A673 (cell line): ENCODE measurements at regions of chr1 and their contacts with region 1.

Region 1: GRCh38 chr1:205121660-205122488 is at the start of gene RBBP5:
- DNase-seq: peak; percentile 97
- H3K4me3 ChIP-seq: peak within 1 kb of the TSS; percentile 87
- H3K27ac ChIP-seq: peak within 1 kb of the TSS; percentile 99
- H3K4me1 ChIP-seq: peaks cover 18% of the 10 kb centered on the region
- H3K27me3 ChIP-seq: no peaks in the 10 kb centered on the region
- CTCF ChIP-seq: peak; percentile 75
- total RNA-seq, gene RBBP5: 24.4 and 32.0 TPM in 2 replicates

Region 2: DNA sequence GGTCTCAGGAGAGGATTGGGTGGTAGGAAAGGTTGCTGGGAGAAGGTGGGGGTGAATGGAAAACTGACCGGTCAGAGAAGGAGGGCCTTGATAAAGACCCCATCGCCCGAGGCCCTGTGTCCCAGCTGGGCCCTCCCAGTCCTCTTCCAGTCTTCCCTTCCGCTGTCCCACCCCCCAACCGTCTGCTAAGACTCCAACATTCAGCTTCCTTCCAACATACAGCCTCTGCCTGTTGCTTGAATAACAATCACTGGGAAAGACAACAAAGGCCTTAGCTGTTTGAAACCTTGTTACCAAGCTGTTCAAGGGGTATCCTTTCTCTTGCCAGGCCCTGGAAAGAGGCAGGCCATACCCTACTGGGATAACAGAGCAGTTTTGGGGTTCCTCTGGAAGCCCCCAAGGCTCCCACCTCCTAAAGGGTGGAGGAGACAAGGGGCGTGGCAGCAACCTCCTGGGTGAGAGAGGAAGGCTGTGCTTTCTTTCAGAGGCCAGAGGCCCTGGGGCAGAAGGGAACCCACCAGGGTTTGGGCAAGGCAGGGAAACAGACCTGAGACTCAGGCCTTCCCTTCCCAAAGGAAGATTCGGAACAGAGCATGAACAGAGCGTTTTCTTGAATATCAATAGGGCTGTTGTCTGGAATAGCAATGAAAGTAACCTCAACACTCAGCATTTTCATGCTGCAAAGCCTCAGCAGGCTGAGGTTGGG is 974.3 kb before region 1 on chr1:
- CTCF ChIA-PET with region 1: no interaction called
- POLR2A ChIA-PET with region 1: no interaction called
- intact Hi-C with region 1: no loop called
- DNase-seq: no peak
- H3K4me3 ChIP-seq: no peak overlapping the region
- H3K27ac ChIP-seq: no peak overlapping the region
- H3K4me1 ChIP-seq: peaks cover 6% of the 10 kb centered on the region
- H3K27me3 ChIP-seq: no peaks in the 10 kb centered on the region
- CTCF ChIP-seq: no peak

Region 3: DNA sequence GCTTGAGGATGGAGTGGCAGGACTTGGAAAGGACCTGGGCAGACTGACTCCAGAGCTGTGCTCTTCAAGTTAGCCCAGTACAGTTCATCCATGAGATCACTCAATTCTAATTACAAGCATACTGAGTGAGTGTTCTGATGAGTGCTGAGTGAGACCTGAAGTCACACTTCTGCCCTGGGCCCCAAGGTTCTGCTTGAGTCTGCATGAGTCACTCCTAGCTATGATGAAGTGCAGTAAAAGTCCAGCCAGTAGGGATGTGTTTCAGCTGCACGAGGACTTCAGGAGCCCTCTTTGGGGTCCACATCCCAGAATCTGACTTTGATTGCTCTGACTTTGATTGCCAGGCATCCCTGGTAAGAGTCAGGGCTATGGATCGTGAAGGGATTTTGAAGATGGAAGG is 798.0 kb before region 1 on chr1:
- CTCF ChIA-PET with region 1: no interaction called
- POLR2A ChIA-PET with region 1: no interaction called
- intact Hi-C with region 1: no loop called
- DNase-seq: no peak
- H3K4me3 ChIP-seq: no peak overlapping the region
- H3K27ac ChIP-seq: no peak overlapping the region
- H3K4me1 ChIP-seq: no peaks in the 10 kb centered on the region
- H3K27me3 ChIP-seq: peaks cover 5% of the 10 kb centered on the region
- CTCF ChIP-seq: no peak

Region 4: DNA sequence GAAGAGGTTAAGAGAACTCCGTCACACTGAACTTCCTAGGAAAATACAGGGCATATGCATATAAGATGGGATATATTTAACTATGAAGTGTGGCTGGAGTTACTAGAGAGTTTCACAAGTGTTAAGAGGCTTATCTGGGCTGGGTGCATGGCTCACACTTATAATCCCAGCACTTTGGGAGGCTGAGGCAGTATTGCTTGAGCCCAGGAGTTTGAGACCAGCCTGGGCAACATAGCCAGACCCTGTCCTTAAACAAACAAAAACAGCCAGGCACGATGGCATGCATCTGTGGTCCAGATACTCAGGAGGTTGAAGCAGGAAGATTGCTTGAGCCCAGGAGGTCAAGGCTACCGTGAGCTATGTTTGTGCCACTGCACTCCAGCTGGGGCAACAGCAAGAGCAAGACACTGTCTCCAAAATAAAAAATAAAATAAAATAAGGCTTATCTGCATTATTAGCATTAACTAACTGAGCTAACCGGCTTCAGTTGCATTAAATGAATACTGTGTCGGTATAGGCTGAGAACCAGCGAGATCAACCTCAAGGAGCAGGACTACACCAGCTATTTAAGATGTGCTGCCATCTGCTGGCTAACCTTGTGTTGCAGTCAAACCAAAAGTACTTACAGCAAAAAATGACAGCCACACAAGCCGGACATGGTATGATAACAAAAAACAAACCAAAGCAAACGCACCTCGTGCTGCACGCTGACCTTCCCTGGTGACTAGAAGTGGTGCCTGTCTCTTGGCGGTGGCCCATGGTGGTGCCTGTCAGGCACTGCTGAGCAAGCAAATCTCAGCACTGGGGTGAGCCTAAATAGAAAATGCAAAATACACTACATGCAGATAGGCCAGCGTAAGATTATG is 19.6 kb after region 1 on chr1:
- CTCF ChIA-PET with region 1: interaction called, 15 read pairs
- POLR2A ChIA-PET with region 1: no interaction called
- intact Hi-C with region 1: no loop called
- DNase-seq: peak; percentile 82
- H3K4me3 ChIP-seq: no peak overlapping the region
- H3K27ac ChIP-seq: no peak overlapping the region
- H3K4me1 ChIP-seq: no peaks in the 10 kb centered on the region
- H3K27me3 ChIP-seq: no peaks in the 10 kb centered on the region
- CTCF ChIP-seq: peak; percentile 86

Region 5: DNA sequence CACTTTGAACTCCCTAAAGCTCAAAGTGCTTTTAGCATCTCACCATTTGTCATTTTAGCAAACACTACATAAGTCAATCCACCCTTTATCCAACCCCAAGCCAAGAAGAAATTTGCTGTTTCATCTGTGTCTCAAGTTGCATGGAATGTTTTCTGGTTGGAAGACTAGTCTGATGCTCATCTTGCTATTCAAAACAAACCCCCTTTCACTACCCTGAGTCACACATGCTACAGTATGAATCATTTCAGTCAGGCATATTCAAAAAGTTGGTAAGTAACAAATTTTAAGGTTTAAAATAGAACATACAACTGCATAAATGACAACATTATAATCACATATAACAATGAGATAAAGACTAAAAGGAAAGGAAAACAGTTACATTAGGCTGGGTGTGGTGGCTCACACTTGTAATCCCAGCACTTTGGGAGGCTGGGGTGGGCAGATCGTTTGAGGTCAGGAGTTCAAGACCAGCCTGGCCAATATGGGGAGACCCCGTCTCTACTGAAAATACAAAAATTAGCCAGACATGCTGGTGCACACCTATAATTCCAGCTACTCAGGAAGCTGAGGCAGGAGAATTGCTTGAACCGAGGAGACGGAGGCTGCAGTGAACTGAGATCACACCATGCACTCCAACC is 51.0 kb after region 1 on chr1:
- CTCF ChIA-PET with region 1: no interaction called
- POLR2A ChIA-PET with region 1: no interaction called
- intact Hi-C with region 1: no loop called
- DNase-seq: peak; percentile 9
- H3K4me3 ChIP-seq: no peak overlapping the region
- H3K27ac ChIP-seq: no peak overlapping the region
- H3K4me1 ChIP-seq: peaks cover 6% of the 10 kb centered on the region
- H3K27me3 ChIP-seq: no peaks in the 10 kb centered on the region
- CTCF ChIP-seq: no peak

Region 6: DNA sequence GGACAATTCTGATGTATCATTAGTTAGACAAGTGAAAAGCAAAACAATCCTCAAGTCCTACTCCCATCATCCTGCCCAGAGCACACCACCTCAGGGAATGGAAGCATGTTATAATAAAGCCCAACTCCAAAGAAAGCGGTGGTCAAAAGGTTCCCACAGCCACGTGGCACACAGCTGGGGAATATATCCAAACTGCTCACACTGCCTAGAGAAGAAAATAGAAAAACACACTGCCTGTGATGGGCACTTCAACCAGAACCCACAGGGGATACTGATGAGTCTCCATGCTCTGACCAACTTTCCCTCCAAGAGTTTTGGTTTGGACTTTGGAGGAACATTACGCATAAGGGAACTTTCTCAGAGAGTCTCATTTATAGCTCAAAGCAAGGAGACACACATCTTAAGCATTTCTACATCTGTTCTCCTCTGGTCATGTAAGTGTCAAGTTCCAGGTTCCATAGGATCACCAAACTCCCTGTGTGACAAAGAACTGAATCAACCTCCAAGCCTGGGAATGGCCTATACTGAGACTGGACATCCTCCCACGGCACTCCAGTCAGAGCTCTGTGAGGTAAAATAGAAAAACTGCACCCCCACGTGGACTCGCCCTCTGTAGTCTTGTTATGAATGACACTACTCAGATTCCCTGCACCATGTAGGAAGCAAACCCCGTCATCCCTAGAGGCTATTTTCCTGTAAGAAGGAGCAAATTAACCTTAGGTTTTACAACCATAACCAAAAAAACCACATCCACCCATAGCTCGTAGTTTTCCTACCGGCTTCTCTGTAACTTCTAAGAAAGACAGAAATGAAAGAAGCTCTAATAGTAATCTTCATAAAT is 77.4 kb after region 1 on chr1:
- CTCF ChIA-PET with region 1: no interaction called
- POLR2A ChIA-PET with region 1: no interaction called
- intact Hi-C with region 1: no loop called
- DNase-seq: no peak
- H3K4me3 ChIP-seq: no peak overlapping the region
- H3K27ac ChIP-seq: no peak overlapping the region
- H3K4me1 ChIP-seq: no peaks in the 10 kb centered on the region
- H3K27me3 ChIP-seq: no peaks in the 10 kb centered on the region
- CTCF ChIP-seq: no peak